ENCODE measurements at regions of chr6 and their contacts with region 1.

Region 1: GRCh38 chr6:25490018-25490801 is 161.8 kb upstream of the SCGN start:
- DNase-seq: peak; percentile 43
- ATAC-seq: peak; percentile 81
- H3K4me3 Mint-ChIP-seq: no peak overlapping the region
- H3K27ac Mint-ChIP-seq: no peak overlapping the region
- H3K4me1 Mint-ChIP-seq: peaks cover 8% of the 10 kb centered on the region
- H3K27me3 Mint-ChIP-seq: no peaks in the 10 kb centered on the region
- CTCF ChIP-seq: no peak

Region 2: DNA sequence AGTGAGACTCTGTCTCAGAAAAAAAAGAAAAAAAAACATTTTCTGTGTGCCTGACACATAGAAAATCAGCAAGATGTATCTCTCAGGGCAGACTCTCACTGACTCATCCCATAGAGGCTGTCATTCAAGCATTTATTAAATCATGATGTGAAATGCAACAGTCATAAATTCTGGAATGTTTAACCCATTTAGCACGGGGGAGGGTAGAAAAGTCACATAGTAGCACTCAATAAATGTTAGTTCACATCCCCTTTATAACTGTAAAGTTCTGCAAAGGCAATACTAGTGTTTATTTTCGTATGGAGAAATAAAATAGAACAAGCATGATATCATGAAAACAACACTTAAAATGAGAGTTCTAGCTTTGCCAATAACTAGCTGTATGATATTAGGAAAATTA is 226.6 kb before region 1 on chr6:
- CTCF ChIA-PET with region 1: interaction called, 188 read pairs
- POLR2A ChIA-PET with region 1: interaction called, 5 read pairs
- intact Hi-C with region 1: loop called (anchors 1 kb)
- DNase-seq: no peak
- ATAC-seq: no peak
- H3K4me3 Mint-ChIP-seq: no peak overlapping the region
- H3K27ac Mint-ChIP-seq: no peak overlapping the region
- H3K4me1 Mint-ChIP-seq: peaks cover 2% of the 10 kb centered on the region
- H3K27me3 Mint-ChIP-seq: peaks cover 5% of the 10 kb centered on the region
- CTCF ChIP-seq: no peak

Region 3: GRCh38 chr6:25404693-25405169 is 85.5 kb before region 1 on chr6:
- CTCF ChIA-PET with region 1: interaction called, 11 read pairs
- POLR2A ChIA-PET with region 1: no interaction called
- intact Hi-C with region 1: loop called (anchors 2 kb)
- DNase-seq: peak; percentile 46
- ATAC-seq: peak; percentile 91
- H3K4me3 Mint-ChIP-seq: no peak overlapping the region
- H3K27ac Mint-ChIP-seq: no peak overlapping the region
- H3K4me1 Mint-ChIP-seq: peaks cover 15% of the 10 kb centered on the region
- H3K27me3 Mint-ChIP-seq: no peaks in the 10 kb centered on the region
- CTCF ChIP-seq: no peak

Region 4: DNA sequence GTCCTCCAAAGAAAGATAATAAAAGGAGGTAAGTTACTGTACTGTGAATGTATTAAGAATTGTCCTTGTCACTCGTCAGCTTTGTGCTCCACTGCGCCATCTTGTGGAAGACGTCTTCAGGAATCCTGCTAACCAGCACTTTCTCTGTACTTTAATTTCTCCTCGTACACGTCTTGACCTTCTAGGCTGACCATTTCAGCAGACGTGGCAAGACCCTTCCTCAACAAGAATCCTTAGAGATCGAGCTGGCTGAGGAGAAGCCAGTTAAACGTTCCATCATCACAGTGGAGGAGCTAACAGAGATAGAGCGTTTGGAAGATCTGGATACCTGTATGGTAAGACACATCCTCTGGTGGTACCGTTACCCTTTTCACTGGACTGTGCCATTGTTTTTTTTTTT is 66.3 kb after region 1 on chr6:
- CTCF ChIA-PET with region 1: interaction called, 6 read pairs
- POLR2A ChIA-PET with region 1: no interaction called
- intact Hi-C with region 1: loop called (anchors 1 kb)
- DNase-seq: peak; percentile 47
- ATAC-seq: peak; percentile 47
- H3K4me3 Mint-ChIP-seq: no peak overlapping the region
- H3K27ac Mint-ChIP-seq: no peak overlapping the region
- H3K4me1 Mint-ChIP-seq: peaks cover 9% of the 10 kb centered on the region
- H3K27me3 Mint-ChIP-seq: no peaks in the 10 kb centered on the region
- CTCF ChIP-seq: peak; percentile 90

Region 5: DNA sequence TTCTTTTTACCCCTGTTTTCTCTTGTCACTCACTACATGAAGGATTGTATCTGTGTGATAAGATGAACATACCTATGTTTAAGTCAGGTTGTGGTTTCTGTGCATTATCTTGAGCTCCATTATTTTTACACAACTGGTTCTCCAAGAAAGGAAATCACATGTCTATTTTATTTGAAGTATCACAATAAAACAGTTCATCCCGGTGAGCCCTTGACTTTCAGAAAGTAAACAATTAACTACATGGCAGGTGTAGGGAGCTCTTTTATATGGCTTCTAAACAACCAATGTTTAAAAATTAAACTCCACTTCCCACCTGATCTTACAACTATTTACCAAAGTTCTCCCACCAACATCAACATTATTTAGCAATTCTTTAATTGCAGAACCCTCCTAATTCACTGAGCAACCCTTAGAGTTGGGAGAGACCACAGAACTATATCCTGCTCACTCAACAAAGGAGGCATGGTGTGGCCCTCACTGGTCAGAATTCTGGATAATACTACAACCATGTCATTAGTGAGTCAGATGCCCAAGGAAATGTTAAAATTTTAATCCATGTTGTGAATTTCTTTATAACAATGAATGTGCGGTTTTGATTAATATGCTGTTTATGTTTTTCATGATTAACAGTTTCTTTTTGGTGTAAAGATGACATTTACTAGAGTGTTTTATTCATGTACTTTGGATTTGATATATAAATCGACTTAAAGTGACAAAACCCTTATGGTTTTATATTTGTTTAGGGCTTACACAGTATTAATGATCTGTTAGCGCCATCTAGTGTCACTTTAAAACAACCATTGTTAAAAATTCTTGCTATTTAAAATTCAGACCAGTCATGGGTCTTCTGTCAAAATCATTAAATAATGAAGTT is 111.8 kb after region 1 on chr6:
- CTCF ChIA-PET with region 1: interaction called, 3 read pairs
- POLR2A ChIA-PET with region 1: no interaction called
- intact Hi-C with region 1: loop called (anchors 2 kb)
- DNase-seq: no peak
- ATAC-seq: no peak
- H3K4me3 Mint-ChIP-seq: no peak overlapping the region
- H3K27ac Mint-ChIP-seq: no peak overlapping the region
- H3K4me1 Mint-ChIP-seq: no peaks in the 10 kb centered on the region
- H3K27me3 Mint-ChIP-seq: no peaks in the 10 kb centered on the region
- CTCF ChIP-seq: peak; percentile 41

Measured in activated B cell treated with CpG ODN at 0.5 μM for 24 hours (primary cell).